PC-3 (cell line): ENCODE measurements at regions of chr7 and their contacts with region 1.

Region 1: DNA sequence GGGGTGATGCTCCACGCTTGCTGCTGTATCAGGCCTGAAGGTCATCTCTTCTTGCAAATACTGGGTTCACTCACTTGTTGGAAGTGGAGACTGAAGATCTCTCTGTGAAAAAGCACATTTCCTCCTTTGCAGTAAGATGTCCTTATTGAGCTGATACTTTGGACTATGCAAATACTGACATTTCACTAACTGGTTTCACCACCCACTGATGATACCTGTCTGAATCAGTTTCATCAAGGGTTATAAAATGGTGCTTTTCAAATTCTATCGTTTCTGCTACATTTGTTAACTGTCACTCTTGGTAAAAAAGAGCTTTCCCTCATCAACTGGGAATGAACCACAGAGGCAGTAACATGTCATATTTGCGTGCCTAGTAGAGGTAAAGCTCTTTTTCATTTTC is 35.5 kb downstream of the RAB19 start:
- DNase-seq: no peak
- ATAC-seq: no peak
- H3K4me3 ChIP-seq: no peak overlapping the region
- H3K27ac ChIP-seq: no peak overlapping the region
- H3K4me1 ChIP-seq: no peaks in the 10 kb centered on the region
- H3K27me3 ChIP-seq: no peaks in the 10 kb centered on the region
- CTCF ChIP-seq: no peak

Region 2: GRCh38 chr7:139820089-139820488 is 619.3 kb before region 1 on chr7:
- CTCF ChIA-PET with region 1: no interaction called
- POLR2A ChIA-PET with region 1: no interaction called
- intact Hi-C with region 1: no loop called
- DNase-seq: no peak
- ATAC-seq: no peak
- H3K4me3 ChIP-seq: no peak overlapping the region
- H3K27ac ChIP-seq: no peak overlapping the region
- H3K4me1 ChIP-seq: no peaks in the 10 kb centered on the region
- H3K27me3 ChIP-seq: no peaks in the 10 kb centered on the region
- CTCF ChIP-seq: no peak

Region 3: GRCh38 chr7:140506788-140507464 is 67.6 kb after region 1 on chr7:
- CTCF ChIA-PET with region 1: interaction called, 10 read pairs
- POLR2A ChIA-PET with region 1: no interaction called
- intact Hi-C with region 1: no loop called
- DNase-seq: no peak
- ATAC-seq: peak; percentile 43
- H3K4me3 ChIP-seq: no peak overlapping the region
- H3K27ac ChIP-seq: no peak overlapping the region
- H3K4me1 ChIP-seq: no peaks in the 10 kb centered on the region
- H3K27me3 ChIP-seq: no peaks in the 10 kb centered on the region
- CTCF ChIP-seq: no peak